Endothelial cell of umbilical vein (primary cell): ENCODE measurements at regions of chr4 and their contacts with region 1.

Region 1: GRCh38 chr4:118278473-118279274 is 74.1 kb downstream of the PRSS12 start:
- DNase-seq: peak; percentile 91
- H3K4me3 ChIP-seq: peak overlapping the region; percentile 89 to 99 (median 98)
- H3K27ac ChIP-seq: peak overlapping the region; percentile 75
- H3K4me1 ChIP-seq: peaks cover 13% of the 10 kb centered on the region
- H3K27me3 ChIP-seq: peaks cover 6% of the 10 kb centered on the region in 2 experiments
- CTCF ChIP-seq: no peak
- POLR2A ChIP-seq: peak; percentile 99

Region 2: GRCh38 chr4:116531870-116532269 is 1746.8 kb before region 1 on chr4:
- CTCF ChIA-PET with region 1: no interaction called
- POLR2A ChIA-PET with region 1: no interaction called
- dilution Hi-C with region 1: no loop called
- intact Hi-C with region 1: loop called (anchors 5 kb)
- DNase-seq: peak; percentile 89
- H3K4me3 ChIP-seq: peak overlapping the region in 1 of 3 experiments; percentile 35
- H3K27ac ChIP-seq: peak overlapping the region; percentile 65
- H3K4me1 ChIP-seq: peaks cover 12% of the 10 kb centered on the region
- H3K27me3 ChIP-seq: no peaks in the 10 kb centered on the region
- CTCF ChIP-seq: no peak
- POLR2A ChIP-seq: peak; percentile 61

Region 3: DNA sequence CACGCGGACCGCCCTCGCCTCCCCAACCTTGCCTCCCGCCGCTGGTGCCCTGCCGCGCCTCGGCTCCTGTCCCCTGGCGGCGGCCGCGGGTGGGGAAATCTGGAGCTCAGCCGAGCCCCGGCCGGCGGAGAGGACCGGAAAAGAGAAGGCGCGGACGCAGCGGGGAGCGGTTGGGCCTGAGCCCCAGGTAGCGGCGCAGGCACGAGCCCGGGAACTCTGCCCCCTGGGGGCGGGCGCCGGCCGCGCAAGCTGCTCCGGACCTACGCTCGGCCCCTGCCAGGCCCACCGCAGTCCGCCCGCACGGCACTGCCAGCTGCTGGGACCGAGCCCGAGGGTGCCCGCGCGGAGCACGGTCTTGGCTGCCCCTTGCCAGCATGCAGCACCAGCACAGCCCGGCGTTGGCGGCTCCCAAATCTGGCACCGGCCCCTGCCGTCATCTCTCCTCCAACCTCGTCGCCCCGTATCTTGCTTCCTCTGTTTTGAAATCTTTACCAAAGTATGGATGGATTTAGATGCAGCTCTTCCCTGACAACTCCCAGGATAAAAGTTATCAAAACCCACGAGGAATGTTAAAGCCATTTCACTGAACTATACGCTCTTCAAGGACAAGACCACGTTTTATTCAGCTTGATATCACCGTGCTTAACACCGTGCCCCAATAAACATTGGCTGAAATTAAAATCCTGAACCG is 74.3 kb after region 1 on chr4 and contains the start of gene PRSS12:
- CTCF ChIA-PET with region 1: interaction called, 8 read pairs
- POLR2A ChIA-PET with region 1: no interaction called
- dilution Hi-C with region 1: no loop called
- intact Hi-C with region 1: loop called (anchors 1 kb)
- DNase-seq: peak; percentile 44
- H3K4me3 ChIP-seq: peak within 1 kb of the TSS in 1 of 3 experiments; percentile 36
- H3K27ac ChIP-seq: no peak within 1 kb of the TSS
- H3K4me1 ChIP-seq: peaks cover 11% of the 10 kb centered on the region
- H3K27me3 ChIP-seq: peaks cover 30 to 60% of the 10 kb centered on the region in 2 experiments
- CTCF ChIP-seq: peak; percentile 84
- POLR2A ChIP-seq: no peak
- total RNA-seq, gene PRSS12: 0.23 and 0.55 TPM in 2 replicates

Region 4: DNA sequence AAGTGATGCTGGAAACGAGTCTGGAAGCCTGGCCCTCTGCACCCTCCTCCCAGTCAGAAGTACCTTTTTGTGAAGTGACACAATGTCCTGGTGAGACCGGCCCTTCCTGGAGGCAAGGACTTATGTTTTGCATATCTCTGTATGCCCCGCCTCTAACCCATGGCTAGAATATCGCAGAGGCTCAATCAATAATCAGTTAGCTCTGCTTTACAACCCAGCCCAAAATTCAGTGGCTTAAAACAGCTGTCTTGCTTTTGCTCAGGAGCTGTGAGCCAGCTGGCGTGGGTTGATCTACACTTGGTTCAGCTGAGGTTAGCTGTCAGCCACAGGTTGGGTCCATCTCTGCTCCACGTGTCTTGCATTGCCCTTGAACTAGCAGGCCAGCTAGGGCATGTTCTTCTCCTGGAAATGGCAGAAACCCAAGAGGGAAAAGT is 307.7 kb after region 1 on chr4:
- CTCF ChIA-PET with region 1: no interaction called
- POLR2A ChIA-PET with region 1: no interaction called
- dilution Hi-C with region 1: no loop called
- intact Hi-C with region 1: loop called (anchors 1 kb)
- DNase-seq: no peak
- H3K4me3 ChIP-seq: no peak overlapping the region
- H3K27ac ChIP-seq: no peak overlapping the region
- H3K4me1 ChIP-seq: no peaks in the 10 kb centered on the region
- H3K27me3 ChIP-seq: peaks cover 11 to 25% of the 10 kb centered on the region in 2 experiments
- CTCF ChIP-seq: no peak
- POLR2A ChIP-seq: no peak

Region 5: GRCh38 chr4:118684873-118685811 is 406.5 kb after region 1 on chr4 and contains the start of gene METTL14:
- CTCF ChIA-PET with region 1: no interaction called
- POLR2A ChIA-PET with region 1: no interaction called
- dilution Hi-C with region 1: no loop called
- intact Hi-C with region 1: loop called (anchors 10 kb)
- DNase-seq: peak; percentile 94
- H3K4me3 ChIP-seq: peak within 1 kb of the TSS; percentile 74 to 95 (median 82)
- H3K27ac ChIP-seq: peak within 1 kb of the TSS; percentile 44
- H3K4me1 ChIP-seq: peaks cover 11% of the 10 kb centered on the region
- H3K27me3 ChIP-seq: no peaks in the 10 kb centered on the region
- CTCF ChIP-seq: peak in 1 of 2 donors; percentile 2
- POLR2A ChIP-seq: peak; percentile 89
- total RNA-seq, gene METTL14: 38.6 and 42.9 TPM in 2 replicates